CD4-positive, alpha-beta T cell (primary cell): ENCODE measurements at regions of chr4 and their contacts with region 1.

Region 1: DNA sequence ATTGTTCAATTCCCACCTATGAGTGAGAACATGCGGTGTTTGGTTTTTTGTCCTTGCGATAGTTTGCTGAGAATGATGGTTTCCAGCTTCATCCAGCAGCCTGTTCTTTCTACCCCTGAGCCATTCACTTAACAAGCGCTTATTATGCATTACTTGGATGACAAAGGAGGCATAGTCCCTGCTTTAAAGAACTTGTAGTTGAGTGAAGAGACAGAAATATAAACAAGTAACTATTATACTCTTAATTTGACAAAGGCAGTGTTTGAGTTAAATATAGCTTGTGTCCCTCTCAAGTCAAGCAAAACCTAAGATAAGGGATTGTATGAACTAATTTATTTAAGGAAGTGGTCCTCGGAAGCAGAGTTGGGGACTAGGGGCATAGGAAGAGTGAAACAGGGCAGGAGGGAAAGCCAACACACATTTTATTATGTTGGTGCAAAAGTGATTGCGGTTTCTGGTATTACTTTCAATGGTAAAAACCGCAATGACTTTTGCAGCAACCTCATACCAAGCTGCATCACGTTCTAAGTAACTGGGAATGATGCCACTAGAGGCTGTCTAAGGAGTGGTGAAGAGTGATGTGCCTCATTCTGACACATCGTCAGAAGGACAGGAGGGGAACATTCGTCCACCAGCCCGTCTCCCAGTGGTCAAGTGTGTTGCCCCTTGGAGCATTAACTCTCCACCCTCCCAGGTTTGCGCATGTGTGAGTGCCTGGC is 41.8 kb downstream of the QDPR start:
- DNase-seq: no peak
- ATAC-seq: no peak
- H3K4me3 ChIP-seq: no peak overlapping the region
- H3K4me3 Mint-ChIP-seq: no peak overlapping the region
- H3K27ac ChIP-seq: no peak overlapping the region
- H3K27ac Mint-ChIP-seq: no peak overlapping the region
- H3K4me1 ChIP-seq: peaks cover 3% of the 10 kb centered on the region
- H3K4me1 Mint-ChIP-seq: no peaks in the 10 kb centered on the region
- H3K27me3 ChIP-seq: no peaks in the 10 kb centered on the region
- H3K27me3 Mint-ChIP-seq: no peaks in the 10 kb centered on the region
- CTCF ChIP-seq: no peak

Region 2: GRCh38 chr4:17347445-17347844 is 122.6 kb before region 1 on chr4:
- CTCF ChIA-PET with region 1: no interaction called
- POLR2A ChIA-PET with region 1: no interaction called
- intact Hi-C with region 1: loop called in 1 of 2 experiments (anchors 5 kb)
- DNase-seq: peak in 9 of 14 experiments; percentile 2 to 60 (median 13)
- ATAC-seq: no peak
- H3K4me3 ChIP-seq: no peak overlapping the region
- H3K4me3 Mint-ChIP-seq: no peak overlapping the region
- H3K27ac ChIP-seq: no peak overlapping the region
- H3K27ac Mint-ChIP-seq: no peak overlapping the region
- H3K4me1 ChIP-seq: no peaks in the 10 kb centered on the region
- H3K4me1 Mint-ChIP-seq: no peaks in the 10 kb centered on the region
- H3K27me3 ChIP-seq: no peaks in the 10 kb centered on the region
- H3K27me3 Mint-ChIP-seq: no peaks in the 10 kb centered on the region
- CTCF ChIP-seq: peak; percentile 52

Region 3: GRCh38 chr4:17762726-17763125 is 292.6 kb after region 1 on chr4:
- CTCF ChIA-PET with region 1: no interaction called
- POLR2A ChIA-PET with region 1: no interaction called
- intact Hi-C with region 1: no loop called
- DNase-seq: peak in 1 of 14 experiments; percentile 7
- ATAC-seq: no peak
- H3K4me3 ChIP-seq: no peak overlapping the region
- H3K4me3 Mint-ChIP-seq: no peak overlapping the region
- H3K27ac ChIP-seq: no peak overlapping the region
- H3K27ac Mint-ChIP-seq: no peak overlapping the region
- H3K4me1 ChIP-seq: no peaks in the 10 kb centered on the region
- H3K4me1 Mint-ChIP-seq: peaks cover 7% of the 10 kb centered on the region
- H3K27me3 ChIP-seq: peaks cover 0 to 4% of the 10 kb centered on the region in 2 experiments
- H3K27me3 Mint-ChIP-seq: no peaks in the 10 kb centered on the region
- CTCF ChIP-seq: no peak

Region 4: GRCh38 chr4:17932041-17932440 is 462.0 kb after region 1 on chr4:
- CTCF ChIA-PET with region 1: no interaction called
- POLR2A ChIA-PET with region 1: no interaction called
- intact Hi-C with region 1: no loop called
- DNase-seq: no peak
- ATAC-seq: no peak
- H3K4me3 ChIP-seq: no peak overlapping the region
- H3K4me3 Mint-ChIP-seq: no peak overlapping the region
- H3K27ac ChIP-seq: no peak overlapping the region
- H3K27ac Mint-ChIP-seq: no peak overlapping the region
- H3K4me1 ChIP-seq: no peaks in the 10 kb centered on the region
- H3K4me1 Mint-ChIP-seq: no peaks in the 10 kb centered on the region
- H3K27me3 ChIP-seq: no peaks in the 10 kb centered on the region
- H3K27me3 Mint-ChIP-seq: no peaks in the 10 kb centered on the region
- CTCF ChIP-seq: no peak